ENCODE measurements at regions of chr2 and their contacts with region 1.

Region 1: GRCh38 chr2:96602330-96602823 is 35.7 kb downstream of the KANSL3 start:
- DNase-seq: peak in 2 of 35 experiments; percentile 8 to 21
- ATAC-seq: peak in 1 of 4 experiments; percentile 37
- H3K4me3 ChIP-seq: no peak overlapping the region
- H3K4me3 Mint-ChIP-seq: no peak overlapping the region
- H3K27ac ChIP-seq: no peak overlapping the region
- H3K27ac Mint-ChIP-seq: peak overlapping the region in 1 of 2 donors; percentile 21
- H3K4me1 ChIP-seq: no peaks in the 10 kb centered on the region
- H3K4me1 Mint-ChIP-seq: peaks cover 3 to 12% (median 11%) of the 10 kb centered on the region in 3 donors
- H3K27me3 ChIP-seq: no peaks in the 10 kb centered on the region
- H3K27me3 Mint-ChIP-seq: no peaks in the 10 kb centered on the region

Region 2: GRCh38 chr2:96116879-96117697 is 485.3 kb before region 1 on chr2:
- CTCF ChIA-PET with region 1: no interaction called
- POLR2A ChIA-PET with region 1: interaction called in 1 of 2 experiments, 11 read pairs
- DNase-seq: peak in 33 of 35 experiments; percentile 19 to 83 (median 46)
- ATAC-seq: peak; percentile 77 to 85 (median 82)
- H3K4me3 ChIP-seq: peak overlapping the region; percentile 15 to 49
- H3K4me3 Mint-ChIP-seq: peak overlapping the region; percentile 44 to 75 (median 57)
- H3K27ac ChIP-seq: no peak overlapping the region
- H3K27ac Mint-ChIP-seq: no peak overlapping the region
- H3K4me1 ChIP-seq: peaks cover 3 to 15% of the 10 kb centered on the region in 2 experiments
- H3K4me1 Mint-ChIP-seq: peaks cover 6 to 23% (median 16%) of the 10 kb centered on the region in 3 donors
- H3K27me3 ChIP-seq: peaks cover 0 to 59% of the 10 kb centered on the region in 2 experiments
- H3K27me3 Mint-ChIP-seq: peaks cover 19 to 39% of the 10 kb centered on the region in 2 donors

Region 3: DNA sequence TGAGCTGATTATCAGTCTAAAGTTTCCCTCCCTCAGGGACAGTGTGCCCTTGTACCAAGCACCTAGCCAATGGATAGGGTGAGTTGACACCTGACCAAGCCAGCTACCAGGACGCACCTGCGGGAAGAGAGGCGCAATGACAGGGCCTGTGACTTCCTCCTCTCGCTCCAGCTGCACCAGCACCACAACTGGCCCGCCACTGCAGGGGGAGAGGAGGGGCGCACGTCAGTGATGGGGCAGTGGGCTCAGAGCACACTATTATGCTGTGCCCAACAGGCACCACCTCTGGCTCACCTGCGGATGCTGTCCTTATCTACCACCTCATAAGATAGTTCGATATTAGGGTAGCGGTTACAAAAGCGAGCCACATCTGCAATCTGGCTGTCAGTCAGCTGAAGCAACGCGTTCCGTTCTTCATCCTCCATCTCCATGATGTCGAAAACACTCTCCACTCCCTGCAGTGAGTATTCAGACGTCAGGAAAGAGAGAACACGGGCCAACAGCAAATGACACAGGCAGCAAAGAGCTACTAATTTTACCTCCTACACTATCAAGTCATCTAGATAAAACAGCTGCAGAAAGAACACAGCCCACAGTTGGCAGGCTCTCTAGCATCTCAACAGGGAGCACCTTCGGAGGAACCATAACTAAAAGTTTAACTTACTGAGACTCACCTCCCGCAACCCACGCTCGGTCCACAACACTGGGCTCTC is 325.4 kb before region 1 on chr2:
- CTCF ChIA-PET with region 1: no interaction called
- POLR2A ChIA-PET with region 1: no interaction called
- DNase-seq: no peak
- ATAC-seq: no peak
- H3K4me3 ChIP-seq: no peak overlapping the region
- H3K4me3 Mint-ChIP-seq: no peak overlapping the region
- H3K27ac ChIP-seq: no peak overlapping the region
- H3K27ac Mint-ChIP-seq: no peak overlapping the region
- H3K4me1 ChIP-seq: no peaks in the 10 kb centered on the region
- H3K4me1 Mint-ChIP-seq: no peaks in the 10 kb centered on the region
- H3K27me3 ChIP-seq: no peaks in the 10 kb centered on the region
- H3K27me3 Mint-ChIP-seq: no peaks in the 10 kb centered on the region

Region 4: GRCh38 chr2:96565111-96565510 is 37.3 kb before region 1 on chr2:
- CTCF ChIA-PET with region 1: no interaction called
- POLR2A ChIA-PET with region 1: no interaction called
- DNase-seq: no peak
- ATAC-seq: no peak
- H3K4me3 ChIP-seq: no peak overlapping the region
- H3K4me3 Mint-ChIP-seq: no peak overlapping the region
- H3K27ac ChIP-seq: no peak overlapping the region
- H3K27ac Mint-ChIP-seq: no peak overlapping the region
- H3K4me1 ChIP-seq: no peaks in the 10 kb centered on the region
- H3K4me1 Mint-ChIP-seq: no peaks in the 10 kb centered on the region
- H3K27me3 ChIP-seq: no peaks in the 10 kb centered on the region
- H3K27me3 Mint-ChIP-seq: no peaks in the 10 kb centered on the region

Region 5: DNA sequence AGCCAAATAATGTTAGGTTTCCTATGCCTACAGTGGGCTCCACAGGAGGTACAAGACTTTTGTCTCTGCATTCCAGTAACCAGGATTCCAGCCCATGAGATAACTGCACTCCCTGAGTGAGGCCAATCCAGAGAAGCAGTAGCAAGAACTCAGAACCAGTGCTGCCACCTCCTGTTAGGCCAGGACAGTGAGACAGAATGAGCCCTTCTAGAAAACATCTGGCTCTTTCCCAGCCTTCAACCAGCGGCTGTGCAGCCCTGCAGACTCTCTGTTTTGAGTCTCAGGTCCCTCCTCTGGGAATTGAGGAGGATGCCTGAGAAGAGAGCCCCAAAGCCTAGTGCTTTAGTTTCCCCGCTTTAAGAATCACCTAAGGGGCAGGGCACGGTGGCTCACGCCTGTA is 21.6 kb before region 1 on chr2:
- CTCF ChIA-PET with region 1: no interaction called
- POLR2A ChIA-PET with region 1: no interaction called
- DNase-seq: no peak
- ATAC-seq: no peak
- H3K4me3 ChIP-seq: no peak overlapping the region
- H3K4me3 Mint-ChIP-seq: no peak overlapping the region
- H3K27ac ChIP-seq: no peak overlapping the region
- H3K27ac Mint-ChIP-seq: no peak overlapping the region
- H3K4me1 ChIP-seq: no peaks in the 10 kb centered on the region
- H3K4me1 Mint-ChIP-seq: no peaks in the 10 kb centered on the region
- H3K27me3 ChIP-seq: no peaks in the 10 kb centered on the region
- H3K27me3 Mint-ChIP-seq: no peaks in the 10 kb centered on the region